PC-9 (cell line): ENCODE measurements at regions of chr3 and their contacts with region 1.

Region 1: GRCh38 chr3:133578548-133579191 is 5.2 kb downstream of the CDV3 start:
- DNase-seq: peak in 1 of 2 experiments; percentile 61
- H3K4me3 ChIP-seq: no peak overlapping the region
- H3K27ac ChIP-seq: peak overlapping the region; percentile 4; the same call in 1 of the 2 replicates
- H3K4me1 ChIP-seq: peaks cover 28% of the 10 kb centered on the region
- H3K27me3 ChIP-seq: no peaks in the 10 kb centered on the region
- CTCF ChIP-seq: peak; percentile 75

Region 2: GRCh38 chr3:133443649-133444422 is 134.8 kb before region 1 on chr3:
- CTCF ChIA-PET with region 1: no interaction called
- POLR2A ChIA-PET with region 1: interaction called, 3 read pairs
- intact Hi-C with region 1: loop called (anchors 2 kb)
- DNase-seq: peak; percentile 41 to 90
- H3K4me3 ChIP-seq: no peak overlapping the region
- H3K27ac ChIP-seq: peak overlapping the region; percentile 76
- H3K4me1 ChIP-seq: peaks cover 15% of the 10 kb centered on the region
- H3K27me3 ChIP-seq: no peaks in the 10 kb centered on the region
- CTCF ChIP-seq: peak; percentile 52